ENCODE measurements at regions of chr7 and their contacts with region 1.

Region 1: DNA sequence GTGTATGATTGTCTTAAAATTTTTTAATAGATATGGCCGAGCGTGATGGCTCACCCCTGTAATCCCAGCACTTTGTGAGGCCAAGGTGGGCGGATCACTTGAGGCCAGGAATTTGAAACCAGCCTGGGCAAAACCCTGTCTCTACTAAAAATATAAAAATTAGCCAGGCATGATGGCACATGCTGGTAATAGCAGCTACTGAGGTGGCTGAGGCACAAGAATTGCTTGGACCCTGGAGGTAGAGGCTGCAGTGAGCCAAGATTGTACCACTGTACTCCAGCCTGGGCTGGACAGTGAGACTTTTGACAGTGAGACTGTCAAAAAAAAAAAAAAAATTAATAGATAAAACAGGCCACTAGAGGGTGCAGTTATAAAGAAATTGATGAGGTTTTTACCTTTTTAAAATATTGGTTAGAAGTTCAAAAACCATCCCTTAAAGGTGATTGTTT is 20.5 kb downstream of the NOM1 start:
- DNase-seq: no peak
- H3K4me3 ChIP-seq: no peak overlapping the region
- CTCF ChIP-seq: no peak

Region 2: DNA sequence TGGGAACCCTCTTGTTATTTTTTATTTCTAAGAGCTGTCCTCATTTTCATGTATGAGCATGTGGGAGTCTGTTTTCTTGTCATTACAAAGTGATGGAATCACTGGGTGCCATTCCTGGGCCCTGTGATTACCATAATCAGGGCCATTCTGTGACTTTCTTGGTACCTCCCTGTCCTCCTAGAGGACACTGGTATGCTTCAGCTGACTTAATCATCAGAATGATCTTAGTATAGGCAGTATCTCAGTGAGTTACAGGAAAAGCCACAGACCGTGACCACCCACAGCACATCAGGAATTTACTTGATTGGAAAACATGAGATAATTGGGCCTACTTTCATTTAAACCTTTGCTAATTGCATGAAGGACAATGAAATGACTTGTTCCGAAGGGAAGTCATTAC is 13.3 kb before region 1 on chr7:
- CTCF ChIA-PET with region 1: interaction called, 75 read pairs
- POLR2A ChIA-PET with region 1: no interaction called
- DNase-seq: no peak
- H3K4me3 ChIP-seq: no peak overlapping the region
- CTCF ChIP-seq: no peak

Measured in AG04449 (cell line).